MCF 10A (cell line): ENCODE measurements at regions of chr3 and their contacts with region 1.

Region 1: DNA sequence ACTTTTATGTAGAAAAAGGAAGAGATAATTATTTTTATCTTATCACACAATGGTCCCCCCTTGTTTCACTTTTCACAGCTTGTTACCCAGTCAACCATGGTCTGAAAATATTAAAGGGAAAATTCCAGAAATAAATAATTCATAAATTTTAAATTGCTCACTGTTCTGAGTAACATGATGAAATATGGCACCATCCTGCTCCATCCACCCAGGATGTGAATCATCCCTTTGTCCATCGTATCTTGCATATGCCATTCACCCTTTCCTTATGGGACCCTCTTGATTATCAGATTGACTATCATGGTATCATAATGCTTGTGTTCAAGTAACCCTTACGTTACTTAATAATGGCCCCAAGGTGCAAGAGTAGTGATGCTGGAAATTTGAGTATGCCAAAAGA is 43.7 kb downstream of the ANKRD28 start:
- DNase-seq: peak; percentile 55
- H3K4me3 Mint-ChIP-seq: no peak overlapping the region
- H3K27ac Mint-ChIP-seq: peak overlapping the region; percentile 44
- H3K4me1 Mint-ChIP-seq: peaks cover 27% of the 10 kb centered on the region
- H3K27me3 Mint-ChIP-seq: no peaks in the 10 kb centered on the region
- CTCF ChIP-seq: no peak

Region 2: GRCh38 chr3:15768421-15769255 is 14.6 kb after region 1 on chr3:
- CTCF ChIA-PET with region 1: no interaction called
- POLR2A ChIA-PET with region 1: interaction called, 11 read pairs
- intact Hi-C with region 1: no loop called
- DNase-seq: peak; percentile 96
- H3K4me3 Mint-ChIP-seq: peak overlapping the region; percentile 28
- H3K27ac Mint-ChIP-seq: peak overlapping the region; percentile 81
- H3K4me1 Mint-ChIP-seq: peaks cover 24% of the 10 kb centered on the region
- H3K27me3 Mint-ChIP-seq: no peaks in the 10 kb centered on the region
- CTCF ChIP-seq: no peak